GM18951 (cell line): ENCODE measurements at regions of chr12 and their contacts with region 1.

Region 1: DNA sequence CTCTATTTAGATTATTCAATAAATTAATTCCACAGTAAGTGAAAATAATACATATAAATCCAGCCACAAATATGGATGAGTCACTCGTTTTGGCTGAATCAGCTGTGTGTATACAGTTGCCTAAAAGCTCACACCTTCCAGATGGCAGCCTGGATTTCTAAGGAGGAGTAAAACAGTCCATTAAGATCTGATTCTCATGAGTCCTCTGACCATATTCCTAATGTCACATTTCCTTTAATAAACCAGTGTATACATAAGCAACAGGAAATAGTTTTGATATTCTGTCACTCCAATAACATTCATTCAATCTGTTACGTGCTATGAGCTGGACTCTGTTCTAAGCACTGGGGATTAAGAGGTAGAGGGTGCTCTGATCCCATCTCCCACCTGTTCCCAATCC is 21.8 kb downstream of the MDM1 start:
- POLR2A ChIP-seq: no peak

Region 2: GRCh38 chr12:67919406-67919805 is 391.0 kb before region 1 on chr12:
- in situ Hi-C with region 1: no loop called
- POLR2A ChIP-seq: no peak

Region 3: GRCh38 chr12:68236421-68237059 is 73.8 kb before region 1 on chr12:
- in situ Hi-C with region 1: loop called (anchors 5 kb)
- POLR2A ChIP-seq: no peak